CD4-positive, alpha-beta memory T cell (primary cell): ENCODE measurements at regions of chr13 and their contacts with region 1.

Region 1: DNA sequence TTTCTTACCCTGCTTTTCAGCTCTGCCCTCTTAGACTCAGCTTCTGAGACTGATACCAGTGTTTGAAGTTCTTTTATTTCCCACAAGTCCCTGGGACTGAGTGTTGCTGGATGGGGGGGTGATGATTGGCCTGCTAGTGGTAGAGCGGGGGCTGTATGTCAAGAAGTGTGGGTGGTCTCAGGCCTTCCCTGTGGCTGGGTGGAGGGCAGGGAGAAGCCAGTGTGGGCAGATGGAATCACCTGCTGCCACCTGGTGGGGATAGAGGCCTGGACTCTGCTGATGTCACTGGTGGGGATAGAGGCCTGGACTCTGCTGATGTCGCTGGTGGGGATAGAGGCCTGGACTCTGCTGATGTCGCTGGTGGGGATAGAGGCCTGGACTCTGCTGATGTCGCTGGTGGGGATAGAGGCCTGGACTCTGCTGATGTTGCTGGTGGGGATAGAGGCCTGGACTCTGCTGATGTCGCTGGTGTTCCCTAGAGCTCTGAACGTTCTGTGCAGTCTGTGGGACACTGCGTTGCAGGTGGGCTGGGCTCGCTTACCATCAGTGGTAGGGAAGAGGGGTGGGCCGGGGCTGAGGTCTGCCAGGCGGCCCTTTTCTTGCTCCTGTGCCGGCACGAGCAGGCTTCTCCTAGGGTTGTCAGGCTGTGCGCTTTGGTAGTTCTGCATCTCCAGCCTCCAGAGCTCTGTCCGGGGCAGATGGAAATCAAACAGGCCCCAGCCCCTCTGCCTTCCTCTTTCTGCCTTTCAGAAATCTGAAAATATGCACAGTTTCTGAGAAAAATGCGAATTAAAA is 101.3 kb downstream of the ARHGEF7 start:
- DNase-seq: peak in 4 of 5 donors; percentile 14 to 32 (median 23)
- H3K4me3 ChIP-seq: no peak overlapping the region
- H3K4me3 Mint-ChIP-seq: no peak overlapping the region
- H3K27ac ChIP-seq: no peak overlapping the region
- H3K27ac Mint-ChIP-seq: peak overlapping the region in 5 of 7 donors; percentile 39 to 82 (median 60)
- H3K4me1 ChIP-seq: no peaks in the 10 kb centered on the region
- H3K4me1 Mint-ChIP-seq: peaks cover 30 to 52% (median 35%) of the 10 kb centered on the region in 4 donors
- H3K27me3 ChIP-seq: no peaks in the 10 kb centered on the region
- H3K27me3 Mint-ChIP-seq: no peaks in the 10 kb centered on the region

Region 2: GRCh38 chr13:111202745-111203144 is 13.6 kb before region 1 on chr13:
- CTCF ChIA-PET with region 1: interaction called, 10 read pairs
- POLR2A ChIA-PET with region 1: interaction called, 3 read pairs
- intact Hi-C with region 1: no loop called
- DNase-seq: peak in 4 of 5 donors; percentile 11 to 52 (median 40)
- H3K4me3 ChIP-seq: no peak overlapping the region
- H3K4me3 Mint-ChIP-seq: peak overlapping the region in 5 of 8 donors; percentile 11 to 57 (median 44)
- H3K27ac ChIP-seq: no peak overlapping the region
- H3K27ac Mint-ChIP-seq: peak overlapping the region; percentile 54 to 84 (median 77)
- H3K4me1 ChIP-seq: peaks cover 46% of the 10 kb centered on the region
- H3K4me1 Mint-ChIP-seq: peaks cover 54 to 81% (median 70%) of the 10 kb centered on the region in 4 donors
- H3K27me3 ChIP-seq: no peaks in the 10 kb centered on the region
- H3K27me3 Mint-ChIP-seq: no peaks in the 10 kb centered on the region

Region 3: DNA sequence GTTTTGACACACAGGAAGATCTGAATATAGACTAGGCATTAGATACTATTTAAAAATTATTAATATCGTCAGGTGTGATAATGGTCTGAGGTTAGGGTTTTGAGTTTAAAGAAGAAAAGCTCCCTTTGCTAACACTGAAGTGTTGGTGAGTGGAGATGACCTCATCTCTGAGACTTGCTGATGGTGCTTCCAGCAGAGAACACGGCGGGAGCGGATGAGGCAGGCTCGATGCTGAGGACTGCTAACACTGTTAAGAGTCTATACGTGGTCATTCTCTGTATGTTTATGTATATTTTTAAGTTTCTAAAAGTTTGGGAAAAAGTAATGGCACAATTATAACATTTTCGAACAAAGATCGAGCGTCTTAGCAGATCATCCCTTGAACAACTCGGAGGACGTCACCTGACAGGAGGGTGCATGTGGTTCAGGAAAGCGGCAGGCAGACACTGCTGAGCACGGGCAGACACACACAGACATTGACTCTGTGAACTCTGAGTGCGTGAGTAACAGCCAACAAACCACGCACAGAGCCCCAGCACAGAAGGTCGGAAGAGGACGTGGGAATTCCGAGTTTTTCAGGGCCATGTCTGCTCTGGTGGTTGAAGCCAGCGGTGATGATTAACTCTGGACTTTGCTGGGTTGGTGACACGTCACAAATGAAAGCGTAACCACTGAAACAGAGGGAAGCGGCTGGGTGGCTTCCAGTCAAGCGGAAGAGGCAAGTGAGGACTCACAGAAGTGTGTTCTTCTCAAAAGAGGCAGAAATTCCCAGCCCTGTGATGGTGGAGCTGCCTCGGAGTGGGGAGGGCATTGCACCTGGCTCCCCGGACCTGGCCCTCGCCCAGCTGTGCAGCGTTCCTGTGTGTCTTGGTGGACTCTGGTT is 12.1 kb after region 1 on chr13:
- CTCF ChIA-PET with region 1: interaction called, 14 read pairs
- POLR2A ChIA-PET with region 1: no interaction called
- intact Hi-C with region 1: no loop called
- DNase-seq: no peak
- H3K4me3 ChIP-seq: no peak overlapping the region
- H3K4me3 Mint-ChIP-seq: no peak overlapping the region
- H3K27ac ChIP-seq: no peak overlapping the region
- H3K27ac Mint-ChIP-seq: no peak overlapping the region
- H3K4me1 ChIP-seq: no peaks in the 10 kb centered on the region
- H3K4me1 Mint-ChIP-seq: peaks cover 14 to 61% (median 39%) of the 10 kb centered on the region in 4 donors
- H3K27me3 ChIP-seq: no peaks in the 10 kb centered on the region
- H3K27me3 Mint-ChIP-seq: no peaks in the 10 kb centered on the region

Region 4: DNA sequence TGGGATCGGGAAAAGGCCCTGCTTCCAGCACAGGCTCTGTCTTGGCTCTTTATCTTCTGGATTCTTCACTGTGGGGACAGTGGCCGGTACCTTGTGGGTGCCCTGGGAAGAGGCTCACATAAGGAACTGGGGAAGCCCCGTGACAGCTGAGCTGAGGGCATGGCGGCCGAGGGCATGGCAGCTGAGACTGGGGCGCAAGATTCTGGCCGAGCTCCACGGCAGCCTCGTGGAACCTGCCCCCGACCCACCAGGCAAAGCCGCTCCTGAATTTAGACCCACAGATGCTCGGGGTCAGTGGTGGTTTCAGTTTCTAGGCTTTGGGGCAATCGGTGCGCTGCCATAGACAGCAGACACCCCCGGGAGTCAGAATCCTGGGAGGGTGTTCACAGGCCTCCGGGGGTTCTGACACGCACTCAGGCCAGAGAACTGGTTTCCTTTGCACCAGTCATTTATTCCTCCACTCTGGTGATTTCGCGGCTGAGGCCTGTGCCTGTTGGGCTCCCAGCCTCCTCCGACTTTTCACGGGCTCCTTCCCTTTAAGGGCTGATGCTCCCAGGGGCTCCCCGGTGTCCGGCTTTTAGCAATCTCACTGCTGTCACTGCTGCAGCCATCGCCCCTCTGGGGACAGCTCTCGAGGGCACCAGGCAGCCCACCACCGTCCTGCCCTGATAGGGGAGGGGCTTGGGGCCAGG is 221.6 kb after region 1 on chr13:
- CTCF ChIA-PET with region 1: no interaction called
- POLR2A ChIA-PET with region 1: no interaction called
- intact Hi-C with region 1: no loop called
- DNase-seq: no peak
- H3K4me3 ChIP-seq: no peak overlapping the region
- H3K4me3 Mint-ChIP-seq: no peak overlapping the region
- H3K27ac ChIP-seq: no peak overlapping the region
- H3K27ac Mint-ChIP-seq: no peak overlapping the region
- H3K4me1 ChIP-seq: no peaks in the 10 kb centered on the region
- H3K4me1 Mint-ChIP-seq: no peaks in the 10 kb centered on the region
- H3K27me3 ChIP-seq: no peaks in the 10 kb centered on the region
- H3K27me3 Mint-ChIP-seq: peaks cover 14 to 16% of the 10 kb centered on the region in 2 donors